ENCODE measurements at regions of chr1 and their contacts with region 1.

Region 1: GRCh38 chr1:9084906-9085305 is 15.5 kb upstream of the SLC2A5 start:
- DNase-seq: peak; percentile 63 to 89
- H3K4me3 ChIP-seq: no peak overlapping the region
- H3K27ac ChIP-seq: no peak overlapping the region
- H3K4me1 ChIP-seq: peaks cover 0 to 17% (median 12%) of the 10 kb centered on the region in 4 donors
- H3K27me3 ChIP-seq: peaks cover 0 to 14% of the 10 kb centered on the region in 2 donors
- CTCF ChIP-seq: no peak

Region 2: GRCh38 chr1:8925406-8925805 is 159.5 kb before region 1 on chr1:
- intact Hi-C with region 1: loop called (anchors 10 kb)
- DNase-seq: no peak
- H3K4me3 ChIP-seq: no peak overlapping the region
- H3K27ac ChIP-seq: no peak overlapping the region
- H3K4me1 ChIP-seq: no peaks in the 10 kb centered on the region
- H3K27me3 ChIP-seq: no peaks in the 10 kb centered on the region
- CTCF ChIP-seq: no peak

Region 3: DNA sequence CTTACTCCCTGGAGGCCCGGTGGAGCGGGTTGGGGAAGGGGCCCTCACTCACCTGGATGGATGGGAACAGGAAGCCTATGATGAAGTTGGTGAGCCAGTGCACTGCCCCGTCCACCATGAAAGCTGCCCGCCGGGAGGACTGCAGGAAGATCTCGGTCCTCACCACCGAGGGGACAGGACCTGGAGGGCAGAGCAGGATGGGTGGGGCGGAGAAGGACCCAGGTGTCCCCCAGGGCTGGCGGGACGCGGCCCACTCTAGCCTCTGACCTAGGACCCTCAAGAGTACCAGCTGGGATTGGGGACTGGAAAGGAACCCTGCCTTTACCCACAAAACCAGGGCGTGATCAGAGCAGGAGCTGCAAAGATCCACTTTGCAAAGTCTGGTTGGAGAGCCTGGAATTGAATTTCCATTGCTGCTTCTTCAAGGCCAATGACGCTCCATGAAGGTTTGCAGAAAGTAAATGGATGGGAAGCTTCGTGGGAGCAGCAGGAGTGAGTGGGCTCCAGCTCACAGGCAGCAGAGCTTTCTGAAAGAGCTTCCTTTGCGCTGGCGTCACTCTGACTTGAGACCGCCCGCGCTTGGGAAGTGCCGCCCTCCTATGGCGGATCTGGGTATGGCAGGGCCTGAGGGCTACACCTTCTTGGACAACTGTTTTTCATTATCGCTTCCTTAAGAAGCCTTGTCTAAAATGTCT is 80.1 kb before region 1 on chr1:
- intact Hi-C with region 1: no loop called
- DNase-seq: peak; percentile 70 to 83
- H3K4me3 ChIP-seq: no peak overlapping the region
- H3K27ac ChIP-seq: no peak overlapping the region
- H3K4me1 ChIP-seq: peaks cover 0 to 15% (median 0%) of the 10 kb centered on the region in 4 donors
- H3K27me3 ChIP-seq: no peaks in the 10 kb centered on the region
- CTCF ChIP-seq: peak; percentile 85 to 97